AG04449 (cell line): ENCODE measurements at regions of chr17 and their contacts with region 1.

Region 1: DNA sequence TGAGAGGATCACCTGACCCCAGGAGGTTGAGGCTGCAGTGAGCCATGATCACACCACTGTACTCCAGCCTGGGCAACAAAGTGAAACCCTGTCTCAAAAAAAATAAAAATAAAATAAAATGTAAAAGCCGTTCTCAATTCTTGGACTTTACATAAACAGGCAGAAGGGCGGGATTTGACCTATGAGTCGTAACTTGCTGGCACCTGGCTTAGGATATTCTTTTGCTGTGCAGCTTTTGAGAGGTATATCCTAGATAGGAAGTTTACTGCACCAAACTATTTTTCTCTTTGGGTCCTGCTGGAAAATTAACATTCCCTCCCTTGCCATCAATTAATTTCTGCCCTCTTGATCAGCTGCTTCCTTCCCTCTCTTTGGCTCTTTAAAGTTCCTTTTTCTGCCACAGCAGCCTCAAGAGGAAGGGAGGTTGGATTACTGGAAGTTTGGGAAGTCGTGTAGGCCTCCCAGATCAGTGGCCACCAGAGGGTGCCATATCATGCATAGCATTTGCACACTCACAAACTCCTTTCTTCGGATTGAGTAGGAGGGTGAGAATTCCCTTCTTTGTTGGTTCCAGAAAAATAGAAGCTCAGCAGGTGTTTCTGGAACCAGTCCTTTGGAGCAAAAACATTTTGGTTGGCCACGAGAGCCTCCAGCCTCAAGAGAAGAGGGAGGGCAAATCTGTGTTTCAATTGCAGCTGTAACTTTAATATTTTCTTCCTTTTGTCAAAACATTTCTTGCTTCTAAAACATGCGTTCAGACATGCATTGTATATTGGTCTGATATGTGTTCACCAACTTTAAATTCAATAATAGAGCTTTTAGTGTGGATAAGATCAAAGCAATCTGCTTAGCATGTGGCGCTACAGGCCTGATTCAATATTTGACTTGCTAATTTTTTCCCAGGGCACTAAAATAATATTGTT is 147.3 kb downstream of the CCDC182 start:
- DNase-seq: peak; percentile 36
- H3K4me3 ChIP-seq: no peak overlapping the region
- CTCF ChIP-seq: peak; percentile 83

Region 2: GRCh38 chr17:57569853-57570252 is 27.9 kb before region 1 on chr17:
- CTCF ChIA-PET with region 1: interaction called, 16 read pairs
- POLR2A ChIA-PET with region 1: no interaction called
- DNase-seq: no peak
- H3K4me3 ChIP-seq: no peak overlapping the region
- CTCF ChIP-seq: no peak

Region 3: DNA sequence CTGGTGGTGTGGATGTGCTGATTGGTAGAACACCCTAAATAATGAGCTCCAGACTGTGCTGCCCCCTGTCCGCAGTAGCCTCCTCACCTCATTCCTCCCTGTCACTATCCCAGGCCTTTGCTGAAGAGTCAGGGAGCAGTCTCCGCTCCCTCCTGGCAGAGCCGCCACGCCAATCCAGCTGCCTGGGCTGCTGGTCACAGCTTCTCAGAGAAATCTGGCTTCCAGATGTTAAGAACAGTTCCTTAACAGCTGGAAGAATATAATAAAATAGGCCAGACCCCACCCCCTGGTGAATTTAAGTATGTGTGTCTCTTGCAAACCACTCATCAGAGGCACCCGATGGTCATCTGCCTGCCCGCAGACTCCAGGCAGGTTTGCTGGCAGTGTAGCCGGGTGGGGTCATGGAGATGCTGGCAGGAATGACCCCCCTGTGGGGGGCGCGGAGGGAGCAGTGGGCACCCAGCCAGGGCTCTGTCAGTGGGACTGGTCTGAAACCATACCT is 13.7 kb before region 1 on chr17:
- CTCF ChIA-PET with region 1: interaction called, 40 read pairs
- POLR2A ChIA-PET with region 1: no interaction called
- DNase-seq: no peak
- H3K4me3 ChIP-seq: no peak overlapping the region
- CTCF ChIP-seq: no peak

Region 4: DNA sequence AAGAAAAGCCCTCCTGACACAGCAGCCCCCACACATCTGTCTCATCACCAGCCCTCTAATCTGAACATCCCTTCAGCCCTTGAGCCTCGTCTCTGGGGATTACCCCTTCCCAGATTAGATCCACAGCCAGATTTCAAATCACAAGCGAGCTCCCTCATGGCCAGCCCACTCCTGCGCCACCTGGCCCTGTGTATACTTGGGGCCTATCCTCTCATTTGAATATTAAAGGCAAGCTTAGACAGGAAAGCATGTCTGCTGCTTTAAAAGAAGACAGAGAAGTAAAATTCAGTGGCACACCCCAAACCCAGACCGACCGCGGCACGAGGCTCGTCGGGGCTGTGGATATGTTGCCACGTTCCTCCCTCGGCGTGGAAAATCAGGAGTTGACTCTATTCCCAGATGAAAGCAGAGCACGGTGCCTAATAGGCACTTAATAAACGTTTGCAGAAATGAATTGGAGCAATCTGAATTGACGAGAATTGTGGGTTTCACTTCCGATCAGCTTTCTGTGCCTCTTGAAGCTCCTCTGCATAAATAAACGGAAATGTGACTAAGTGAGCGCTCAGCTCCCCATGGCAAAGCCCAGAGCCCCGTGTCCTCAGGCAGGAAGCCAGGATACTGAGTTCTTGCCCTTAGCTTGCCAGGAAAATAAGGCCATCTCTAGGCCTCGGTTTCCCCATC is 39.3 kb after region 1 on chr17:
- CTCF ChIA-PET with region 1: interaction called, 16 read pairs
- POLR2A ChIA-PET with region 1: no interaction called
- DNase-seq: no peak
- H3K4me3 ChIP-seq: no peak overlapping the region
- CTCF ChIP-seq: no peak

Region 5: DNA sequence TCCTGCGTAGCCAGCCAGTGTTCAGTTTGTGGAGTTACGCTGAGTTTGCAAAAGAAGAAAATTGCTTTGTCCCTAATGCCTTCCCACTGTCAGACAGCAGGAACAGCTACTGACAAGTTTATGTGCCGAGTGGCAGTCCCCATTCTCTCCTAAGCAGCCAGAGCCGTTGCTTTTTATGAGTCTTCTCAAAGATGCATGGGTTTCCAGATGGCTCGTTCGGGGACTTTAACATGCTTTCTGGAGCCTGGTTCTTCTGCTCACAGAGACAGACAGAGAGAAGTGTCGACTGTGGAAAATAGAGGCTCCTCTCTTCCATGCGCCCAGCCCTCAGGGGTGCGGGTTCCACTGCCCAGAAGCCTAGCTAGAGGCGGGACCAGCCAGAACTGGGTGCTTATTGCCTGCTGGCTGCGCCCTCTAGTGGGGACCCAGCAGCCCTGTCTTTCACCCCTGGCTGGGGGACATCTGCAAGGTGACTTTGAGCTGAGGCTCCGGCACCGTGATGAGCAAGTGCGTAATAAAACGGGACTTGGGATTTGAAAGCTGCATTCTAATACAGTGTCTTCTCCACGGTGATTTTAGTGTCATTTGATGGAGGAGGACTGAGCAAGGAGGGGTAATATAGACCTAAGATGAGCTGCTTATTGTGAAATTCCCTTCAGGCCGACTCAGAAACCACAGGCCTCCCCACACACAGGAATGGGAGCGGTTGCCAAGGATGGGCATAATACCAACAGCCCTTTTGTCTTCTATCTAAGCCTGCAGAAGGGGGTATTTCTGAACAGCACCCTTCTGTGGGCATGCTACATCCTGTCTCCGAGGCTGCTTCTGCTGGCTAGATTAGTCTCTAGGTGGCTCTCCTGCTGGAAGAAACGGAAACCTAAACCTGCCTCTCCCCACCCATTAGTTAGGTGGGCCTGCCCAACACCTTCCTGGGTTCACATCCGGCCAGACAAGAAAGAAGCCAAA is 74.2 kb after region 1 on chr17:
- CTCF ChIA-PET with region 1: interaction called, 188 read pairs
- POLR2A ChIA-PET with region 1: no interaction called
- DNase-seq: peak; percentile 47
- H3K4me3 ChIP-seq: no peak overlapping the region
- CTCF ChIP-seq: peak; percentile 97

Region 6: GRCh38 chr17:57724026-57724728 is 126.4 kb after region 1 on chr17:
- CTCF ChIA-PET with region 1: interaction called, 10 read pairs
- POLR2A ChIA-PET with region 1: no interaction called
- DNase-seq: no peak
- H3K4me3 ChIP-seq: no peak overlapping the region
- CTCF ChIP-seq: no peak

Region 7: DNA sequence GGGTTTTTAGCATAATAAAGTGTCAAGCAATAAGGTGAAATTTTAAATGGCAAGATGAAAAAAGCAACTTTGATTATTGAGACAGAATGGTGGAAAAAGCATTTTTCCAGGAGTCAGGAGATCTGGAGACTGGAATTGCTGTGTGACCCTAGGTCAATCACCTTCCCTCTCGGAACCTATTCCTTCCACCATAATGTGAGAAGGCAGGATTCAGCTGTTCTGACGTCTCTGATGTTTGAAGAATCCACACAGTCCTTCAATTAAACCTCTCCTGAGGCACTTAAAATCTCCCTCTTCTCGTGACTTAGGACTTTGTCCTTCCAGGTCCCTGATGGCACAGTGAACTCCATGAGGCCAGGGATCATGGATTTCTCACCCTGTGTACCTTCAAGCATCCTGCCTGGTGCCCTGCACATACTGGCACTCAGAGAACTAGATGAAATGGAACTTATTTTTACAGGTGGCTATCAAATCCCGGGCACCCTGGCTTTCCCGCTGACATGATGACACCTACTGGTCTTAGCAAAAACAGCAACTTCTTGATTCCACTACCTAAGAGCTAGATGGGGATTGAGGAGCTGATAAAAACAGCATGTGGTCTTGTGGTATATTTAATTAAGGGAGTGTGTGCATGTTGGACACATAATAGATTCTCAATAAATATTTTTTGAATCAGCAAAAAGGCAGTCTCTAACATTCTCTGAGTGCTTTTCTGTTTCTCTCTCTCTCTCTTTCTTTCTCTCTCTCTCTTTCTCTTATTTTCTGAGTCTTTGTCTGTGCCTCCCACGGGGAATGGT is 149.6 kb after region 1 on chr17:
- CTCF ChIA-PET with region 1: interaction called, 31 read pairs
- POLR2A ChIA-PET with region 1: no interaction called
- DNase-seq: peak; percentile 24
- H3K4me3 ChIP-seq: no peak overlapping the region
- CTCF ChIP-seq: peak; percentile 59